Activated CD4-positive, alpha-beta T cell treated with anti-CD3 and anti-CD28 coated beads, Interleukin-2, amount 10 ng/mL, durations not matched to agents 24 days and 14 days (primary cell): ENCODE measurements at regions of chr3 and their contacts with region 1.

Region 1: DNA sequence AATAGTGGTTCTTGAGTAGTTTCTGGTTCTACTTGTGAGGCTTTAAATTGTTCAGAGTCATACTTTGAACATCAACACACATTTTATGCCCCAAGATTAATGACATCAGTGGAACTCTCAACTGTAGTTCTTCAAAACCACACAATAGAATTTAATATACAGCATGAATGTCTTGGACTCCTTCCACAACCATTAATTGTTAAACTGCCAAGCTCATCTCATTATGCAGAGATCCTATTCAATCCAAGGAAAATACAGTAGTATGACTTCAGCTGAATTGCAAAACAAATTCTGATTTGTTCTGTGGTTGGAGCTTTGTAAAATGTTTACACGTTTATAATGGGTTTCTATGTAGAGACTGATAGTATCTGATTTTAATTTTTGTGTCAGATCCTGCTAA is 199.2 kb upstream of the SLC2A2 start:
- DNase-seq: peak; percentile 12
- H3K4me3 Mint-ChIP-seq: no peak overlapping the region
- H3K27ac Mint-ChIP-seq: peak overlapping the region; percentile 69
- H3K4me1 Mint-ChIP-seq: peaks cover 38% of the 10 kb centered on the region
- H3K27me3 Mint-ChIP-seq: no peaks in the 10 kb centered on the region

Region 2: GRCh38 chr3:171248425-171249111 is 22.9 kb after region 1 on chr3:
- intact Hi-C with region 1: loop called (anchors 1 kb)
- DNase-seq: peak; percentile 60
- H3K4me3 Mint-ChIP-seq: no peak overlapping the region
- H3K27ac Mint-ChIP-seq: no peak overlapping the region
- H3K4me1 Mint-ChIP-seq: peaks cover 34% of the 10 kb centered on the region
- H3K27me3 Mint-ChIP-seq: no peaks in the 10 kb centered on the region

Region 3: GRCh38 chr3:171284308-171285075 is 58.8 kb after region 1 on chr3:
- intact Hi-C with region 1: loop called (anchors 2 kb)
- DNase-seq: no peak
- H3K4me3 Mint-ChIP-seq: peak overlapping the region; percentile 23
- H3K27ac Mint-ChIP-seq: peak overlapping the region; percentile 69
- H3K4me1 Mint-ChIP-seq: peaks cover 44% of the 10 kb centered on the region
- H3K27me3 Mint-ChIP-seq: no peaks in the 10 kb centered on the region